ENCODE measurements at regions of chr3 and their contacts with region 1.

Region 1: DNA sequence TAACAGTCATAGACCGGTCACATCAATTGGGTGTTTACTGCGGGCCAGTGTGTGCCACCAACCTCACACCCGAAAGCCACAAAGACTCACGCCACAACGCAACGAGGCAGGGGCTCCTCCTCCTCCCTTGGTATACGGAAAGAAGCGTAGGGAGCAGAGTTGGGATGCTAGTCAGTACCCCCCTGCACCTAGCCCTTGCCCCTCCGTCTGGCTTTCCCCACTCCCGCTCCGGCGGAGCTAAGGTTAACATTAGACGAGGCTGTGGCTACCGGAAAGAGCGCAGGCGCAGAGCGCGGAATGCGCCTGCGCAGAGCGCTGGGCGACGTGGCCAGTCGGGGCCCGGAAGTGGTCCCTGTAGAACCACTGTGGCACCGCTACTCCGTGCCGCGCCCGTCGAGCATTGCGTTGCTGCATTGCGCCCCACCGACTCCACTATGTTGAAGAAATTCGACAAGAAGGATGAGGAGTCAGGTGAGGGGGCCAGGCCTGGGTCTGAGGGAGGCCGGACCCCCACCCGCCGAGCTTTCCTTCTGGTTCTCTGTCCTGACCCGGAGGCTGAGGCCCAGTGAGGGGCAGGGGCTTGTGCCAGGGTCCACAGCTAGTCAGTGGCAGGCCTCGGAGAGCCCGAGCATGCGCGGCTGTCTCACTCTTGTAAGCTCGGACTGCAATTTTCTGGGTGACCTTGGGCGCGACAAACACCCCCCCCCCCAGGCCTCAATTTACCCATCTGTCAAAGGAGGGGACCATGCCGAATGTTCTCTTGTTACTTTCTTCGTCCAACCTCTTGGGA is at the start of gene COPG1:
- DNase-seq: peak; percentile 52
- H3K4me3 ChIP-seq: peak within 1 kb of the TSS; percentile 79
- H3K27me3 ChIP-seq: no peaks in the 10 kb centered on the region
- CTCF ChIP-seq: no peak
- polyA plus RNA-seq, gene COPG1: 181 and 220 TPM in 2 replicates

Region 2: DNA sequence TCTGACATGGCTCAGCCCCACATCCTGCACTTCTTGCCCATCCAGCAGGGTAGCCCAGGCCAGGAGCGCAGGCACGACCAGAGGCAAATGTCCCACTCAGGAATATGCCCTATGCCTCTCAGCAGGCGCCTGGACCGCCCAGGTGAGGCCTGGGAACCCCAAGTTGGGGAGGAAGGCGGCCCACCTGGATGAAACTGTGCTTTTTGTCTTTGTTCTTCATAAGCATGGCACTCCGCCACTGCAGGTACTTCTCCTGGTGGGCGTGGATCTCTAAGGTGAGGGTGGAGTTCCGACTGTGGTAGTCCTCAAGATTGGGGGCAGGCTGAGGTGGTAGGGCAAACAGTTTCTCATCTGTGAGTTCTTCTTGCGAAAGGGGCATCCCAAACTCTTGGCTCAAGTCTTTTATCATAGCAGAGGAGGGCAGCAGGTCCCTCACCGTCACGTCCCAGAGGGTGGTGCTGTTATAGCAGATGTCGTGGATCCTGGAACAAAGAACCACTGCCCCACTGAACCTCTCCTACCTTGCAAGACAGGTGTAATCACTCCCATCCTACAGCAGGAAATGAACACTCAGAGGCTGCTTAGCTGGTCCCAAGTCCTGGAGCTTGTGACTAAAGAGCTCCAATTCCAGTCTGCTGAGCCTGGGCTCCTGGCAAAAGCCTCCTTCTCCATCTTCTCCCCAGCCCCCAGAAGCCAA is 316.8 kb before region 1 on chr3:
- CTCF ChIA-PET with region 1: no interaction called
- POLR2A ChIA-PET with region 1: no interaction called
- DNase-seq: no peak
- H3K4me3 ChIP-seq: no peak overlapping the region
- H3K27me3 ChIP-seq: peaks cover 12% of the 10 kb centered on the region
- CTCF ChIP-seq: no peak

Region 3: DNA sequence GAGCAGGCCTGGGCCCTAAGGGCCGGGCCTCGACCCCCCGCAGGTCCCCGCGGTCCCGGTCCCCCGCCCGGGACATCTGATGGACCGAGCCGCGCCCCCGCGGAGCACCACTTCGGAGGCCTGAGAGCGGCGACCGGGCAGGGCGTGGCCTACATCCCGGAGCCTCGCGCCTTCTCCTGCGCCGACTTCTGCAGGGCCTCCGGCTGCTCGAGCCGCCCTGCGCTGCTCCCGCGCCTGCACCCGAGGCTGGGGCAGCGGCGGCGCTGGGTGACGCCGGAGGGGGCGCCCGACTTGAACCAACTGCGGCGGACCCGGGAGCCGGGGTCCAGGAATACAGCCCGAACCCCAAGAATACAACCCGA is 203.8 kb before region 1 on chr3:
- CTCF ChIA-PET with region 1: interaction called, 91 read pairs
- POLR2A ChIA-PET with region 1: no interaction called
- DNase-seq: no peak
- H3K4me3 ChIP-seq: no peak overlapping the region
- H3K27me3 ChIP-seq: peaks cover 12% of the 10 kb centered on the region
- CTCF ChIP-seq: no peak

Region 4: DNA sequence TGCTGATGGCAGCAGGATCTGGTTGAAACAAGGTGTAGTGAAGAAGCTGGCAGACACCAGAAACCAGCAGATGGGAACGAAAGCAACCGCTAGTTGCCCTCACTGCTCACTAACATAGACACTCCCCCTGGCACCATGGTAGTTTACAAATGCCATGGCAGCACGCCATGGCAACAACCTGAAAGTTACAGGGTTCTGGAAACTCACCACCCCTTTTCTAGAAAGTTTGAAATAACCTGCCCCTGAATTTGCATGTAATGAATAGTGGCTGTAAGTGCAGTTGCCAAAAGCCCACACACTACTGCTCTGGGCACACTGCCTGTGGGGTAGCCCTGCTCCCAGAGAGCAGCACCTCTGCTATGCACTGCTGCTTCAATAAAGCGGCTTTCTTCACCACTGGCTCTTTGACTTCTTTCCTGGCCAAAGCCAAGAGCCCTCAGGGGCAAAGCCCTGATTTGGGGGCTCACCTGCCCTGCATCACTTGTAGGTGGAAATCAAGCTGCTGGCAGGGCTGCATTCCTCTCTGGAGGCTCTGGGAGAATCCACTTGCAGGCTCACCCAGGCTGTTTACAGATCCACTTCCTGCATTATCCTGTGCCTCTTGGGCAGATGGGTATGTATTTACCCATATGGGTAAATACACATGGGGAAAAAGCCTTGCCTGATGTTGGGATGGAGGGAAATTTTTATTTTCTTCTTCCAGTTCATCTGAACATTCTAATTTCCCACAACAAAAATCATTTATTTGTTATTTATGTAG is 190.8 kb before region 1 on chr3:
- CTCF ChIA-PET with region 1: interaction called, 91 read pairs
- POLR2A ChIA-PET with region 1: no interaction called
- DNase-seq: no peak
- H3K4me3 ChIP-seq: no peak overlapping the region
- H3K27me3 ChIP-seq: peaks cover 10% of the 10 kb centered on the region
- CTCF ChIP-seq: no peak

Region 5: GRCh38 chr3:129160891-129161859 is 88.3 kb before region 1 on chr3 and contains the start of gene ISY1:
- CTCF ChIA-PET with region 1: interaction called, 35 read pairs
- POLR2A ChIA-PET with region 1: no interaction called
- DNase-seq: peak; percentile 65
- H3K4me3 ChIP-seq: peak within 1 kb of the TSS; percentile 83
- H3K27me3 ChIP-seq: no peaks in the 10 kb centered on the region
- CTCF ChIP-seq: peak; percentile 91
- polyA plus RNA-seq, gene ISY1: 21.0 and 34.2 TPM in 2 replicates

Region 6: DNA sequence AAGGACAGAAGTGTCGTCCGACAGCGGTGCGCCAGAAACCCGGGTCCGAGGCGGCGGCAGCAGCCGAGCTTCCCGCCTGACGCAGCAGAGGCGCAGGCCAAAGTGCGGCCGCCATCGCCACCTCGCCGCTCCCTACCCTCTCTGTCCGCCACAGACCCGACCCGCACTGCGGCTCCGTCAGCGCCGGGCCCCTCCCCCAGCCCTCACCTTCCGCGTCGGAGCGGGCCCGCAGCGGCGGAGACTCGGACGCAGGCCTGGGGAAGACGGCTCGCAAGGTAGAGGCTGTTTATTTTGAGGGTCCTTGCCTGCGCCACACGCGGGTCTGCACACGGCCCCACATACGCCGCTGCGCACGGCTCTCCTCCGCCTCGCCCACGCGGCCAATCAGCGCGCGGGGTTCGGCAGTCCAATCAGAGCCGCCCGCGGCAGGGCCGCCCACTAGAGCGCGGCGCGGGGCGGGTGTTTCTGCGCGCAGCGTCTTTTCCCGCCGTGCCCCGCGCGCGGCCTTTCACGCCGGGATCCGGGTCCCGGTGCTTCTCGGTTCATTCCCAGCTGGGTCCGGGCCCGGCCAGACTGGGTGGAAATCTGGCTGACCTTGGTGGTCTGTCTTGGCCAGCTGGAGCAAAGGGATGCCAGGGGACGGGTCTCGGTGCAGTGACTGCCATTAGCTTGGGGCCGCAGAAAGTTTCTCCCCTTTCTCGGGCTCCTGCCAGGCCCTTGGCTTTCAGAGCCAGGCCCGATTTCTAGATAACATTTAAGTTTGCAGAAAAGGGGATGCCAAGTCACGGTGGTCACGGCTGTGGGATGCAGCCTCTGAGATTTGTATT is 65.7 kb before region 1 on chr3 and contains the start of gene CNBP:
- CTCF ChIA-PET with region 1: interaction called, 19 read pairs
- POLR2A ChIA-PET with region 1: no interaction called
- DNase-seq: peak; percentile 59
- H3K4me3 ChIP-seq: peak within 1 kb of the TSS; percentile 89
- H3K27me3 ChIP-seq: no peaks in the 10 kb centered on the region
- CTCF ChIP-seq: no peak
- polyA plus RNA-seq, gene CNBP: 268 and 278 TPM in 2 replicates

Region 7: GRCh38 chr3:129233538-129233937 is 15.9 kb before region 1 on chr3:
- CTCF ChIA-PET with region 1: interaction called, 26 read pairs
- POLR2A ChIA-PET with region 1: interaction called, 3 read pairs
- DNase-seq: no peak
- H3K4me3 ChIP-seq: no peak overlapping the region
- H3K27me3 ChIP-seq: no peaks in the 10 kb centered on the region
- CTCF ChIP-seq: no peak